Dorsolateral prefrontal cortex (tissue), 120 donors: ENCODE measurements at regions of chr5 and their contacts with region 1.

Region 1: DNA sequence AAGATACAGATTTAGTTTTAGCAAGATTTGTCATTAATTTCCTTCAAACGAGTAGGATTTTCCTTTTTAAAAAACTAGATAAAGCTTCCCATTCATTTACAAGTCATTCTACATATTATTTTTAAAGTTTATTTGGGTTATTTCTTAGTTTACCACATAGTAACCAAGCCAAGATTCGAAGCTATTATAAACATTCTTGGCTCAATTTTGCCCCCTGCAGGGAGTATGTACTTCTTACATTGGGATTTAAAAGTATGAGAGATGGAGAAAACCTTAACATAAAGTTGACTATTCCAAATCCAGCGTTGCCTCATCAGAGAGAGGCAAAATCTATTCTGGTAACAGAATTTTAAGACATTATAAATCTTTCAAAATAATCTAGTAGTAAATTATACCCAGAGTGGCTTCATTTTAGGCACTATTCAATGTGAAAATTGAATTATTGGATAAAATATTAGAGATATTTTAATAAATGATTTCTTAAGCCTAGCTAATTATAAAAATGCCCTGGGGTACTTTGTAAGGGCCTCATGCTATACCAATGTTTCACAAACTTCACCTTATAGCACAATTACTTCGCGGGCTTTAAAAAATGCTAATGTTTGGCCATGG is 39.1 kb downstream of the FBN2 start:
- DNase-seq: no peak
- H3K4me3 ChIP-seq: no peak overlapping the region
- H3K27ac ChIP-seq: no peak overlapping the region
- H3K27me3 ChIP-seq: no peaks in the 10 kb centered on the region
- CTCF ChIP-seq: peak in 48 of 56 donors; percentile 20 to 68 (median 47)

Region 2: DNA sequence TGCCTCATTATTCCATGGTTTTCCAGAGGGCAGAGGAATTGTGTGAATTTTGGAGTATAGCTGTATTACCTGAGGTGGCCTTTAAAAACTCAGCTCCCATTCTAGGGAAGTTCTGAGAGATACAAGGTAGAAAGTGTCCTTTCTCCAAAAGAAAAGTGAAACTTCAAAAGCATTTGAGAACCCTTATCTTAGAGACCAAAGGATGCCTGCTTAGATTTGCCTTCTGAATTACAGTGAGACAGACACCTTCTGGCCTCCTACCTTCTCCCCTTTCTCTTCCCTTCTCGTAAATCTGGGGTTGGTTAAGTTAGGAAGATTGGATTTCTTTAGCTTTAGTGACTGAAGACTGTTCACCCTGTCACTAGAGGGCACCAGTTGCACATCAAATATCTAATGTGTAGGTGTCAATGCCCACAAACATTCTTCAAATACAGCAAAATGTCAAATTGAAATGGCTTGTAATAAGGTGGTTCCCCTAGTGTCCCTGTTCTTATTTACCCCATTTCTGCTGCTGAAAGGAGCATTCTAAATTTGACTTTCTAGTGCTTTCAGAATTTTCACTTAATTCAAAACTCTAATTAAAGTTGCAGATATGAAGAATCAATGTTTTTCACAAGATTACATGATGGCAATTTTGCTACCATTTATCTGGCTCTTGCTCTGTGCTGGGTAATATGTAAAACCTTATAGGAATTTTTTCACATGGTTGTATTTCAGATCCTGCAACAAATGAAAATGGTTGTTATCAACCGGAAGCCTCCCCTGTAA is 934.8 kb before region 1 on chr5:
- intact Hi-C with region 1: loop called in 1 of 2 experiments (anchors 10 kb)
- DNase-seq: peak in 2 of 10 donors; percentile 24 to 52
- H3K4me3 ChIP-seq: no peak overlapping the region
- H3K27ac ChIP-seq: no peak overlapping the region
- H3K27me3 ChIP-seq: peaks cover 0 to 7% (median 0%) of the 10 kb centered on the region in 45 donors
- CTCF ChIP-seq: peak; percentile 46 to 85 (median 71)

Region 3: GRCh38 chr5:128213340-128213739 is 285.6 kb before region 1 on chr5:
- intact Hi-C with region 1: loop called in 1 of 2 experiments (anchors 5 kb)
- DNase-seq: peak in 6 of 10 donors; percentile 28 to 67 (median 45)
- H3K4me3 ChIP-seq: no peak overlapping the region
- H3K27ac ChIP-seq: no peak overlapping the region
- H3K27me3 ChIP-seq: no peaks in the 10 kb centered on the region
- CTCF ChIP-seq: peak; percentile 50 to 95 (median 85)

Region 4: DNA sequence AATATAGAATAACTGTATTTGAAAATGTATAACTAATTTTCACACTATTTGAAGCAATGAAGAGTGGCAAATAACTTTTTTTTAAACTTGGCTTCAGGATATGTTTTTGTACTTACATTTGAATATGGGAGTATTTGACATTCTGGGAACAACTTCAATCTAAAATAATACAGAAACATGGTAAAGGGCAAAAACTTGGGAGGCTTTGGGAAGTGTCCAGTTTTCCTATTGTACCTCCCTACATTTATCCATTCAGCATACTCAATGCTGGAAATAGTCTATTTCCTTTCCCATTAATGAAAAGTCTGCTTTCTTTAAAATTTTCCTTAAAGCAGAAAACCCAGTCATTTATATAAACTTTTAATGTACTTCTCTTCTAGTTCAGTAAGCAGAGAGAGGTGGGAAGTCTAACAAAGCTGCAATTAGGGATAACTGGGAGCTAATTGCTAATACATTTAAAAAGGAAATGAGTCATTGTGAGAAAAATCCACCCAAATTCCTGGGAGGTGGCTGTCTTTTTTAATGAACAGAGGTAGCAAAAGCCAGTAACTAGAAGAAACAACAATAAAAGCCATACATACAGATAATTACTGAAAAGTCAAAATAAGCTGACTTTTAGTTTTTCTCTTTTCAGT is 89.7 kb before region 1 on chr5:
- intact Hi-C with region 1: no loop called
- DNase-seq: no peak
- H3K4me3 ChIP-seq: no peak overlapping the region
- H3K27ac ChIP-seq: no peak overlapping the region
- H3K27me3 ChIP-seq: no peaks in the 10 kb centered on the region
- CTCF ChIP-seq: no peak

Region 5: GRCh38 chr5:128984480-128984879 is 485.5 kb after region 1 on chr5:
- intact Hi-C with region 1: no loop called
- DNase-seq: no peak
- H3K4me3 ChIP-seq: no peak overlapping the region
- H3K27ac ChIP-seq: no peak overlapping the region
- H3K27me3 ChIP-seq: peaks cover 0 to 5% (median 0%) of the 10 kb centered on the region in 45 donors
- CTCF ChIP-seq: no peak